MCF 10A (cell line): ENCODE measurements at regions of chr5 and their contacts with region 1.

Region 1: GRCh38 chr5:149960272-149961185 is at the start of gene SLC26A2:
- DNase-seq: peak; percentile 100
- H3K4me3 Mint-ChIP-seq: peak within 1 kb of the TSS; percentile 96
- H3K27ac Mint-ChIP-seq: peak within 1 kb of the TSS; percentile 97
- H3K4me1 Mint-ChIP-seq: peaks cover 38% of the 10 kb centered on the region
- H3K27me3 Mint-ChIP-seq: no peaks in the 10 kb centered on the region
- CTCF ChIP-seq: no peak
- total RNA-seq, gene SLC26A2: 44.1 and 56.2 TPM in 2 replicates

Region 2: GRCh38 chr5:149636851-149637246 is 323.7 kb before region 1 on chr5:
- CTCF ChIA-PET with region 1: interaction called, 24 read pairs
- POLR2A ChIA-PET with region 1: interaction called, 11 read pairs
- intact Hi-C with region 1: loop called (anchors 1 kb)
- DNase-seq: peak; percentile 90
- H3K4me3 Mint-ChIP-seq: no peak overlapping the region
- H3K27ac Mint-ChIP-seq: no peak overlapping the region
- H3K4me1 Mint-ChIP-seq: peaks cover 47% of the 10 kb centered on the region
- H3K27me3 Mint-ChIP-seq: no peaks in the 10 kb centered on the region
- CTCF ChIP-seq: peak; percentile 98

Region 3: DNA sequence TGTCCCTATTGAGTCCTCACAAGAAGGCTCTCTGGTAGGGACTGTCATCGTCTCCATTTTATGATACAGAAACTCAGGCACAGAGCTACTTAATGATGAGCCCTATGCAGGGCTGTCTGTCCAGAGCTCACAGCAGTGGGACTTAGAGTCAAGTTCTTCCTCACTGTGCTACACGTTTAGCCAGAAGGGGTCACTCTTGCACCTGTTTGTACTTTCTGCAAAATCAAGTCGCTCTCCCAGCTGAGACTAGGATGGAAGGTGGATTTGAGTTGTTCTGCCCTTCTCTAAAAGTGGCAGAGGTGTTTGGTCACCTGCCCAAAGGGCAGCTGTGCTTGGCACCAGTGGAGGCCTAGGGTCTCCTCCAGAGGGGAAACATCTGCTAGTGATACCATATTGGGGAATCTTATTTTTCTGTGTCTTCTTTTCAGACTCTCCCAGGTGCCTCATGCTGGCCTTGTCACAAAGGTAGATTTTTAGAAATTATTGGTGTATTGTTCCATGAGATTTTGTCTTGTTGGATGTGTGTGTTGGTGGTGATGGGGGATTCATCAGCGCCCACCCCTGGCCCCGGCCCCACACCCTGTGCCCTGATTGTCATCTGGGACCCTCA is 126.2 kb before region 1 on chr5:
- CTCF ChIA-PET with region 1: interaction called, 1,621 read pairs
- POLR2A ChIA-PET with region 1: interaction called, 187 read pairs
- intact Hi-C with region 1: loop called (anchors 1 kb)
- DNase-seq: peak; percentile 87
- H3K4me3 Mint-ChIP-seq: no peak overlapping the region
- H3K27ac Mint-ChIP-seq: peak overlapping the region; percentile 42
- H3K4me1 Mint-ChIP-seq: peaks cover 17% of the 10 kb centered on the region
- H3K27me3 Mint-ChIP-seq: no peaks in the 10 kb centered on the region
- CTCF ChIP-seq: peak; percentile 92

Region 4: DNA sequence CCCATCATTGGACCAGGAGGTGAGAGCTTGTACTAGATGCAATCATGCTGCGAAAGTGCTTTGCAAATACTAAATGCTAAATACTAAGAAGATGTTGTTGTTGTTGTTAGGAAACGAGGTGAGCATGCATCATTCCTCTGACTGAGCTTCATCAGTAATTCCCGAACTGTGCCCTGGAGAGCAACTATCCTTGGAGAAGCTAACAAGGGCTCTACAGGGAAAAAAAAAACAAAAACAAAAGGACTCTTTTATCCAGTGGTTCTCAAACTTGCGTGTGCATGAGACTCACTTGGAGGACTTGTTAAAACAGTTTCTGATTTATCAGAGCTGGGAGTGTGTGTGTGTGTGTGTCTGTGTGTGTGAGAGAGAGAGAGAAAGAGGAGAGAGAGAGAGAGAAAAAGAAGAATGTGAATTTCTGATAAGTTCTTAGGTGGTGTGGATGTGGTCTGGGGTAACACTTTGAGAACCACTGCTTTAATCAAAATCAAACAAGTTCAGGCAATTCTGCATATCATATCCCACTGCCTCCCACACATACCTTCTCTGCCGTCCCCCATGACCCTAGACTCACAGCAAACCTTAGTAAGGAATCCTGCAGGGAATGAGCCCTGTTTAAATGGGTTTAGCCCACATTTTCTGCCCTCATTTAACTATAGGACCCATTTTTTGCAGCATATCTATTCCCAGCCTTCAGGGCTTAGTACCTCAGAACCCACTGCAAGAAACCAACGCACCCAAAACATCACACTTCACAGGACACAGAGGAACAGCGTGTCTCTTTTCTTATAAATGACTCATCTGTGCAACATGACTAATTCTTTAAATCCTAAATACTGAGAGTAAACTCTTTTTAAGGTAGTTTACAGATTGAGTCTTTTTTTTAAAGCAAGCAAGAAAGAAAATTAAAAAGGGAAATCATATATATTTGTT is 64.8 kb before region 1 on chr5:
- CTCF ChIA-PET with region 1: interaction called, 117 read pairs
- POLR2A ChIA-PET with region 1: interaction called, 71 read pairs
- intact Hi-C with region 1: no loop called
- DNase-seq: peak; percentile 87
- H3K4me3 Mint-ChIP-seq: peak overlapping the region; percentile 40
- H3K27ac Mint-ChIP-seq: peak overlapping the region; percentile 84
- H3K4me1 Mint-ChIP-seq: peaks cover 42% of the 10 kb centered on the region
- H3K27me3 Mint-ChIP-seq: no peaks in the 10 kb centered on the region
- CTCF ChIP-seq: no peak

Region 5: GRCh38 chr5:149932445-149933350 is 27.8 kb before region 1 on chr5:
- CTCF ChIA-PET with region 1: interaction called, 105 read pairs
- POLR2A ChIA-PET with region 1: interaction called, 138 read pairs
- intact Hi-C with region 1: no loop called
- DNase-seq: no peak
- H3K4me3 Mint-ChIP-seq: no peak overlapping the region
- H3K27ac Mint-ChIP-seq: no peak overlapping the region
- H3K4me1 Mint-ChIP-seq: peaks cover 51% of the 10 kb centered on the region
- H3K27me3 Mint-ChIP-seq: no peaks in the 10 kb centered on the region
- CTCF ChIP-seq: no peak

Region 6: DNA sequence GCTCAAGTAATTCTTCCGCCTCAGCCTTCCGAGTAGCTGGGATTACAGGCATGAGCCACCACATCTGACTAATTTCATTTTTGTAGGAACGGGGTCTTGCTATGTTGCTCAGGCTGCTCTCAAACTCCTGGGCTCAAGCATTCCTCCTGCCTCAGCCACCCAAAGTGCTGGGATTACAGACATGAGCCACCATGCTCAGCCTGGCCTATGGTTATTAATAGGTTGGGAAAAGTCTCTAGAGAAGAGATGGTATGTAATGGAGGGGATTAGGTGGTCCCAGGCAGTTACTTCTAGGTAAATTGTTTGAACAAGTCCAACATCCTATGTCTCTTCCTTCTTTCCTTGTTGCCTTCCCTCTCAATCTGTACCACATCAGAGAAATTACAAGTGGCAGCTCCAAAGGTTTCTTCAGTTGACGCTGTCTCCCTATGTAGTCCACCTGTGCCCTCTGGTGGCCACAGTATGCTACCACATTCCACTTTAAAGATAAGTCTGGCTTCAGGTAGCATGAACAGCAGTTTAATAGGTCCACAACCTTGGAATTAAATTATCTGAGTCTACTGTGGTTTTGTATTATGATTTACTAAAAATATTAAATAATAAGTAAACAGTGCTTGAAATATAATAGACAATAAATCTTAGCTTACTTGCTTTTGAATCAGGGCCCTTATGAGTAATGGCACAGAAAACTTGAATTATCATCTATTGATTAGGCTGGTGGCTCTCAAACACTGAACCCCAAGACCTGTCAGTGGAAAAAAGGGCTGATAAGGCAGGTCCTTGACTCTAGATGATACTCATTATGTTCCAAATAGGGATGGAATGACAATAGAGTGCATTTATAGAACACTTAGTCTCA is 30.2 kb after region 1 on chr5:
- CTCF ChIA-PET with region 1: interaction called, 80 read pairs
- POLR2A ChIA-PET with region 1: interaction called, 23 read pairs
- intact Hi-C with region 1: loop called (anchors 1 kb)
- DNase-seq: peak; percentile 91
- H3K4me3 Mint-ChIP-seq: no peak overlapping the region
- H3K27ac Mint-ChIP-seq: no peak overlapping the region
- H3K4me1 Mint-ChIP-seq: peaks cover 10% of the 10 kb centered on the region
- H3K27me3 Mint-ChIP-seq: no peaks in the 10 kb centered on the region
- CTCF ChIP-seq: peak; percentile 96

Region 7: GRCh38 chr5:150045546-150045945 is 85.0 kb after region 1 on chr5:
- CTCF ChIA-PET with region 1: no interaction called
- POLR2A ChIA-PET with region 1: no interaction called
- intact Hi-C with region 1: no loop called
- DNase-seq: no peak
- H3K4me3 Mint-ChIP-seq: no peak overlapping the region
- H3K27ac Mint-ChIP-seq: no peak overlapping the region
- H3K4me1 Mint-ChIP-seq: peaks cover 31% of the 10 kb centered on the region
- H3K27me3 Mint-ChIP-seq: no peaks in the 10 kb centered on the region
- CTCF ChIP-seq: no peak